Activated CD4-positive, alpha-beta memory T cell treated with anti-CD3 and anti-CD28 coated beads, Interleukin-2, amount 10 ng/mL, durations not matched to agents 7 days and 5 days (primary cell): ENCODE measurements at regions of chr11 and their contacts with region 1.

Region 1: DNA sequence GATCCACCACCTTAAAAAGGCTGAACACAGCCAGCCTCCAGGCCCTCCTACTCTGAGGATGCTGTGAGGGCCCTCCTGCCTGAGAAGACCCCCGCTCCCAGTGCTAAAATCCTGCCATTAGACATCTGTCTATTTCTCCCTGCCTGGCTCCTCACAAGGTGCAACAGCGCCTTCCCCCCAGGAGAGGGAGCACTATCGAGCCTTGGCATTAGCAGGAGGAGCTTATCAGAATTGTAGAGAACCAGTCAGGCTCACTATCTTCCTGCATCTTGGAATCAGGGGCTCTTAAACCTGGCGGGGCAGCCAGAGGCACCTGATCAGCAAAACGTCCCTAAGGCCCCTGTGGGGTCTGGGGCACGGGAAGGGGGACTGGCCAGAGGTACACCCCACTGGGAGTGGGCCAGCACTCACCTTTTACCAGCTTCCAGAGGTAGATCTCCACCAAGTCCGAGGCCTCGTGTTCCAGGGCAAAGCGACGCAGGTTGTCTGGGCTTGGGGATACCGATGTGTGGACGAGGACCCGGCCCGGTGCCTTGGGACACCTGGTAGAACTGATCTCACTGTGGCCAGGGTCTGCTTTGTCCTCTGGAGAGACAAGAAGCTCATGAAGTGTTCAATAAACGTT is 28.7 kb downstream of the CHRDL2 start:
- DNase-seq: peak; percentile 62
- H3K4me3 Mint-ChIP-seq: no peak overlapping the region
- H3K27ac Mint-ChIP-seq: no peak overlapping the region
- H3K4me1 Mint-ChIP-seq: no peaks in the 10 kb centered on the region
- H3K27me3 Mint-ChIP-seq: no peaks in the 10 kb centered on the region

Region 2: GRCh38 chr11:74366576-74366975 is 335.9 kb before region 1 on chr11:
- CTCF ChIA-PET with region 1: no interaction called
- POLR2A ChIA-PET with region 1: no interaction called
- DNase-seq: no peak
- H3K4me3 Mint-ChIP-seq: no peak overlapping the region
- H3K27ac Mint-ChIP-seq: no peak overlapping the region
- H3K4me1 Mint-ChIP-seq: no peaks in the 10 kb centered on the region
- H3K27me3 Mint-ChIP-seq: no peaks in the 10 kb centered on the region

Region 3: GRCh38 chr11:74662487-74663103 is 39.9 kb before region 1 on chr11:
- CTCF ChIA-PET with region 1: no interaction called
- POLR2A ChIA-PET with region 1: no interaction called
- DNase-seq: no peak
- H3K4me3 Mint-ChIP-seq: no peak overlapping the region
- H3K27ac Mint-ChIP-seq: no peak overlapping the region
- H3K4me1 Mint-ChIP-seq: no peaks in the 10 kb centered on the region
- H3K27me3 Mint-ChIP-seq: no peaks in the 10 kb centered on the region

Region 4: GRCh38 chr11:74726547-74727182 is 24.2 kb after region 1 on chr11:
- CTCF ChIA-PET with region 1: interaction called, 50 read pairs
- POLR2A ChIA-PET with region 1: no interaction called
- DNase-seq: peak; percentile 61
- H3K4me3 Mint-ChIP-seq: no peak overlapping the region
- H3K27ac Mint-ChIP-seq: no peak overlapping the region
- H3K4me1 Mint-ChIP-seq: peaks cover 3% of the 10 kb centered on the region
- H3K27me3 Mint-ChIP-seq: peaks cover 57% of the 10 kb centered on the region

Region 5: GRCh38 chr11:74739546-74740270 is 37.2 kb after region 1 on chr11:
- CTCF ChIA-PET with region 1: interaction called, 24 read pairs
- POLR2A ChIA-PET with region 1: no interaction called
- DNase-seq: peak; percentile 44
- H3K4me3 Mint-ChIP-seq: no peak overlapping the region
- H3K27ac Mint-ChIP-seq: no peak overlapping the region
- H3K4me1 Mint-ChIP-seq: peaks cover 3% of the 10 kb centered on the region
- H3K27me3 Mint-ChIP-seq: peaks cover 35% of the 10 kb centered on the region

Region 6: GRCh38 chr11:74870485-74870884 is 168.0 kb after region 1 on chr11:
- CTCF ChIA-PET with region 1: interaction called, 15 read pairs
- POLR2A ChIA-PET with region 1: no interaction called
- DNase-seq: no peak
- H3K4me3 Mint-ChIP-seq: no peak overlapping the region
- H3K27ac Mint-ChIP-seq: no peak overlapping the region
- H3K4me1 Mint-ChIP-seq: no peaks in the 10 kb centered on the region
- H3K27me3 Mint-ChIP-seq: no peaks in the 10 kb centered on the region

Region 7: GRCh38 chr11:75004215-75004614 is 301.7 kb after region 1 on chr11:
- CTCF ChIA-PET with region 1: no interaction called
- POLR2A ChIA-PET with region 1: no interaction called
- DNase-seq: no peak
- H3K4me3 Mint-ChIP-seq: no peak overlapping the region
- H3K27ac Mint-ChIP-seq: no peak overlapping the region
- H3K4me1 Mint-ChIP-seq: peaks cover 10% of the 10 kb centered on the region
- H3K27me3 Mint-ChIP-seq: no peaks in the 10 kb centered on the region